ENCODE measurements at regions of chr16 and their contacts with region 1.

Region 1: GRCh38 chr16:83887081-83887480 is 11.8 kb upstream of the MLYCD start:
- DNase-seq: no peak

Region 2: DNA sequence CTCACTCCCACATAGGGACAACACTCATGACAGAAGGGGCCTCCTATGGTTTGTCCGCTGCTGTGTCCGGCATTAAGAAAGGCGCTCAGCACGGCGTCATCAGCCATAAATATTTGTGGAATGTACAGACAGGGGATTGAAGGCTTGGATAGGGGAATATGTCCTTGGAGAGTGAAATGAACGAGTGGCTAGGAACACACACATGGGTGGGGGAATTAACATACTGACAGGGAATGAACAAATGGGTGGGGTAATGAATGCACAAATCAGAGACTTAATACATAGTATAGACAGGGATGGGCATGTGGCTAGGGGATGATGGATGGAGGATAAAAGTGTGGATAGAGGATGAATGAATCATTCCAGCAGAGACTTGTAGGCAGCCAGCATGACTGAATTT is 233.3 kb before region 1 on chr16:
- in situ Hi-C with region 1: no loop called
- DNase-seq: no peak

Region 3: GRCh38 chr16:83835586-83836566 is 51.2 kb before region 1 on chr16:
- in situ Hi-C with region 1: loop called (anchors 10 kb)
- DNase-seq: peak; percentile 73